Right cardiac atrium (tissue), 5 donors: ENCODE measurements at regions of chr5 and their contacts with region 1.

Region 1: GRCh38 chr5:31186672-31187267 is 6.7 kb upstream of the CDH6 start:
- DNase-seq: no peak
- ATAC-seq: no peak
- H3K4me3 ChIP-seq: no peak overlapping the region
- H3K27ac ChIP-seq: no peak overlapping the region
- H3K4me1 ChIP-seq: no peaks in the 10 kb centered on the region
- H3K27me3 ChIP-seq: no peaks in the 10 kb centered on the region

Region 2: GRCh38 chr5:30638899-30639298 is 547.9 kb before region 1 on chr5:
- intact Hi-C with region 1: no loop called
- DNase-seq: no peak
- ATAC-seq: no peak
- H3K4me3 ChIP-seq: no peak overlapping the region
- H3K27ac ChIP-seq: no peak overlapping the region
- H3K4me1 ChIP-seq: no peaks in the 10 kb centered on the region
- H3K27me3 ChIP-seq: no peaks in the 10 kb centered on the region

Region 3: GRCh38 chr5:30804739-30805505 is 381.8 kb before region 1 on chr5:
- intact Hi-C with region 1: loop called in 3 of 4 experiments (anchors 10 kb)
- DNase-seq: no peak
- ATAC-seq: peak in 1 of 2 donors; percentile 45
- H3K4me3 ChIP-seq: no peak overlapping the region
- H3K27ac ChIP-seq: no peak overlapping the region
- H3K4me1 ChIP-seq: no peaks in the 10 kb centered on the region
- H3K27me3 ChIP-seq: no peaks in the 10 kb centered on the region

Region 4: GRCh38 chr5:31144364-31144763 is 42.4 kb before region 1 on chr5:
- intact Hi-C with region 1: no loop called
- DNase-seq: no peak
- ATAC-seq: no peak
- H3K4me3 ChIP-seq: no peak overlapping the region
- H3K27ac ChIP-seq: no peak overlapping the region
- H3K4me1 ChIP-seq: no peaks in the 10 kb centered on the region
- H3K27me3 ChIP-seq: no peaks in the 10 kb centered on the region